Left ventricle myocardium inferior (tissue), 1 donor: ENCODE measurements at regions of chr20 and their contacts with region 1.

Region 1: GRCh38 chr20:24149881-24150307 is 161.3 kb upstream of the GGTLC1 start:
- DNase-seq: peak; percentile 51
- H3K4me3 ChIP-seq: no peak overlapping the region
- H3K27ac ChIP-seq: no peak overlapping the region
- H3K4me1 ChIP-seq: no peaks in the 10 kb centered on the region
- H3K27me3 ChIP-seq: peaks cover 4% of the 10 kb centered on the region
- CTCF ChIP-seq: peak; percentile 69

Region 2: DNA sequence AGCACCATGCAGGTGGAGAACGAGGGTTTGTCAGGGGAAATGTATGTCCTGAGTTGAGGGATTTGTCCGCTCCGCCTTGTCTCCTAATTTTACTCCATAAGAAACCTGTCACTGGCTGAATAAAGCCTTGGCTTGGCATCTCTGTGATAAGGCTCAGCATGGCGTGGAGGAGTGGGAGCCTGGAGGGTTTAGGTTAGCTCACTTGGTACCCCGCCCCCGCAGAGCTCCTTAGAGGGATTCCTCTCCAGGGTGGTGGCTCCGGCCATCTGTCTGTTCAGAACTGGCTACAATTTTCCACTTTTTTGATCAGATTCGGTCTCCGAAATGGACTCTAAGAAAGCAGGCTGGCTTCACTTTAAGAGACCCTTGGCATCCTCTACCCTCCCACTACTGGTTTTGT is 127.3 kb after region 1 on chr20:
- intact Hi-C with region 1: no loop called
- DNase-seq: no peak
- H3K4me3 ChIP-seq: no peak overlapping the region
- H3K27ac ChIP-seq: no peak overlapping the region
- H3K4me1 ChIP-seq: no peaks in the 10 kb centered on the region
- H3K27me3 ChIP-seq: peaks cover 54% of the 10 kb centered on the region
- CTCF ChIP-seq: no peak

Region 3: GRCh38 chr20:24445510-24446170 is 295.7 kb after region 1 on chr20:
- intact Hi-C with region 1: loop called (anchors 10 kb)
- DNase-seq: no peak
- H3K4me3 ChIP-seq: no peak overlapping the region
- H3K27ac ChIP-seq: no peak overlapping the region
- H3K4me1 ChIP-seq: no peaks in the 10 kb centered on the region
- H3K27me3 ChIP-seq: peaks cover 66% of the 10 kb centered on the region
- CTCF ChIP-seq: no peak

Region 4: GRCh38 chr20:24501764-24502556 is 352.1 kb after region 1 on chr20:
- intact Hi-C with region 1: loop called (anchors 10 kb)
- DNase-seq: no peak
- H3K4me3 ChIP-seq: no peak overlapping the region
- H3K27ac ChIP-seq: peak overlapping the region; percentile 92
- H3K4me1 ChIP-seq: peaks cover 68% of the 10 kb centered on the region
- H3K27me3 ChIP-seq: no peaks in the 10 kb centered on the region
- CTCF ChIP-seq: no peak